ENCODE measurements at regions of chr11 and their contacts with region 1.

Region 1: GRCh38 chr11:12893787-12894672 is 115.1 kb upstream of the RASSF10 start:
- DNase-seq: peak; percentile 65
- ATAC-seq: no peak

Region 2: GRCh38 chr11:12331239-12331874 is 562.7 kb before region 1 on chr11:
- intact Hi-C with region 1: loop called (anchors 5 kb)
- DNase-seq: peak; percentile 82
- ATAC-seq: peak; percentile 90

Region 3: DNA sequence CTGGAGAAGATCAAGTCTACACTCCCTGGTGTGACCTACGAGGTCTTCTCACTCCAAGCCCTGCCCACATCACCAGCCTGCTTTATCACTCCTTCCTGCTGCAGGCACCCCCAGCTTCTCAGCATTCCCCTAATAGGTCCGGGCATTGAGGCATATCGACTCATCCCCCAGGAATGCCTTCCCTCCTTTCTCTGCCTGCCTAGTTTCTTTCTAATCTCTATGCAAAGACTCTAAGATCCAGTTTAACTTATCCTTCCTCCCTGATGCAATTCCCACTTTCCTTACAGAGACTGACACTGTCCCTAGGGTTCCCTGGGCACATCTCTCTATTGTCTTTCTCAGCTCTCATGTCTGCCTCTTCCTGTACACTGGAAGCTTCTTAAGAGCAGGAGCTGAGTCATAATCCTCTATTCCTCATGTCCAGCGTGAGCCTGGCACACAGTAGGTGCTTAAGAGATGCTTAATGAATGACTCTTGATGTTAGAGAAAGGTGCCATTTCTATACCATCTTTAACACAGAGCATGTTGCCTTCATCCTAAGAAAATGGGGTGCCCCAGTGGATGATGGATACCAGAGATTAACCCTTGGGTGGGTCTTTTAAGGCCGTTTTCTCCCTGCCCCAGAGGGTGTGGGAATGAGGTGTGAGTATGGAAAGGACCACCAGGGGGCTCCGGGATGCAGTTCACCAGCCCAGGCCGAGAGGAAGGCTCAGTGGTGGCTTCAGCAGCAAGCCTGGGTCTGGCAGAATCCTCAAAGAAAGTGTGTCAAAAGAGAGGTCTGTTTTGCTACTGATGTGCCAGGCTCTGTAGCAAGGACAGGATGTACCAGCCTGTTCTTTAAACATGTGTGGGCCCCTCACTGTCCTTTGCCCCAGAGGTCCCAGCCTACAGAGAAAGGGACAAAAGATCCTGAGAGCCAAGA is 482.0 kb before region 1 on chr11:
- intact Hi-C with region 1: loop called (anchors 10 kb)
- DNase-seq: peak; percentile 68
- ATAC-seq: peak; percentile 83

Region 4: GRCh38 chr11:12516387-12517105 is 377.5 kb before region 1 on chr11:
- intact Hi-C with region 1: loop called (anchors 10 kb)
- DNase-seq: peak; percentile 53
- ATAC-seq: peak; percentile 60

Region 5: DNA sequence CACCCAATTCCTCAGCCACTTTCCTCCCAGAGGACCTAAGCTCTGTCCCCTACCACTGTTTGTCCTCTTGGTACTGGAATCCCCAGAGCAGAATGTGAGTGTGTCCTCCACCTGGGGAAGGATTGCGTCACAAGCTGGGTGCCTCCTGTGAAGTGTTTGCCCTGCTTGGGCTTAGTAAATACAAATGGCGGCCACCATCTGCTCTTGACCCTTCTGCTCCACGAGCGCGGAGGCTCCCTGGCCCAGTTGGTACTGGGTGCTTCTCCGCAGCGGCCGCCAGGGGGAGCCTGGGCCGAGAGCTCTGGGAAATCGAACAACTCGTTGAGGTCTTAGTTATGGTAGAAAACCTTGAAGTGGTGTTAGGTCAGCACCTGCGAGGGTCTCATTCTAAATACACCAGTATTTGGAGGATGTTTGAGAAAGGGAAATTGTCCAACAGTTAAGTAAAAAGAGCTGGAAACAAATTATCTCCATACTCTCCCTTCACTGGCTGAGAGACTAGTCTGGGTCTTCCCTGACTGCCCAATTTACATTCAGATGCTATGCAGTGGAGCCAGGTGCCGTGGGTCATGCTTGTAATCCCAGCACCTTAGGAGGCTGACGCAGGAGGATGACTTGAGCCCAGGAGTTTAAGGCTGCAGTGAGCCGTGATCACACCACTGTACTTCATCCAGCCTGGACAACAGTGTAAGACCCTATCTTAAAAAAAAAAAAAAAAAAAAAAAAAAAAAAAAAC is 294.5 kb before region 1 on chr11:
- intact Hi-C with region 1: loop called (anchors 10 kb)
- DNase-seq: peak; percentile 64
- ATAC-seq: peak; percentile 85

Region 6: GRCh38 chr11:12746593-12747097 is 147.4 kb before region 1 on chr11:
- intact Hi-C with region 1: no loop called
- DNase-seq: peak; percentile 83
- ATAC-seq: peak; percentile 60

Region 7: GRCh38 chr11:13210424-13210823 is 316.4 kb after region 1 on chr11:
- intact Hi-C with region 1: no loop called
- DNase-seq: peak; percentile 57
- ATAC-seq: peak; percentile 81